Thyroid gland (tissue), 4 donors: ENCODE measurements at regions of chr3 and their contacts with region 1.

Region 1: DNA sequence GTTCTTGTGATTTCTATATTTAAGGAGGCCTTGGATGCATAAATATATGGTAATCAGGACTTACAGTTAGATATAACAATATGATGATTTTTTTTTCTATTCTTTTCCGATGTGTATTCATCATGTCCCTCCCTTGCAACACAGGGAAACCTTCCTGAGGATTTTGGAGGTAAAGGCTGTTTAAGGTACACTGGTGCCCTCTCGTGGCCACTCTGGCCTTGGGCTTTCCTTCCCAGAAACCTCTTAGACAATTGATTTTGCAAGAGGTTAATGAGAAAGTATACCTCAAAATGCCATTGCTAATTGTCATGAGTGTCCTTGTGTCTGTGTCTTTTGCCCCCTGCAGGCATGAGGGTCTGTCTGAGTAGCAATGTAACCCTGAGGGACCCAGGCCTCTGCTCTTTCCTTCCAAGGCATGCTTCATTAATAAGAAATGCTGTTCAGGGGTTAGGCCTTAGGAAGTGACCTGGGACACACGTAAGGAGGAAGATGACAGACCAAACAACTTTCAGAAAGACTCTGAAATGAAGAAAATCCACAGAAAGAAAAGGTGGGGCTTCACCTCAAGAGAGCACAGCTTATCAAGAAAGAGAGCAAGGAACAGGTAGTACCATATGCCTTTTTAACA is 70.3 kb upstream of the PPP2R3A start:
- DNase-seq: peak; percentile 77 to 82
- H3K4me3 ChIP-seq: no peak overlapping the region
- H3K27ac ChIP-seq: no peak overlapping the region
- H3K4me1 ChIP-seq: no peaks in the 10 kb centered on the region
- H3K27me3 ChIP-seq: no peaks in the 10 kb centered on the region
- CTCF ChIP-seq: peak; percentile 47 to 85 (median 76)
- POLR2A ChIP-seq: no peak

Region 2: GRCh38 chr3:134600685-134601463 is 1294.3 kb before region 1 on chr3:
- intact Hi-C with region 1: loop called (anchors 10 kb)
- DNase-seq: peak; percentile 67 to 72
- H3K4me3 ChIP-seq: no peak overlapping the region
- H3K27ac ChIP-seq: no peak overlapping the region
- H3K4me1 ChIP-seq: peaks cover 4 to 11% of the 10 kb centered on the region in 2 donors
- H3K27me3 ChIP-seq: no peaks in the 10 kb centered on the region
- CTCF ChIP-seq: peak; percentile 75 to 98 (median 90)
- POLR2A ChIP-seq: no peak

Region 3: DNA sequence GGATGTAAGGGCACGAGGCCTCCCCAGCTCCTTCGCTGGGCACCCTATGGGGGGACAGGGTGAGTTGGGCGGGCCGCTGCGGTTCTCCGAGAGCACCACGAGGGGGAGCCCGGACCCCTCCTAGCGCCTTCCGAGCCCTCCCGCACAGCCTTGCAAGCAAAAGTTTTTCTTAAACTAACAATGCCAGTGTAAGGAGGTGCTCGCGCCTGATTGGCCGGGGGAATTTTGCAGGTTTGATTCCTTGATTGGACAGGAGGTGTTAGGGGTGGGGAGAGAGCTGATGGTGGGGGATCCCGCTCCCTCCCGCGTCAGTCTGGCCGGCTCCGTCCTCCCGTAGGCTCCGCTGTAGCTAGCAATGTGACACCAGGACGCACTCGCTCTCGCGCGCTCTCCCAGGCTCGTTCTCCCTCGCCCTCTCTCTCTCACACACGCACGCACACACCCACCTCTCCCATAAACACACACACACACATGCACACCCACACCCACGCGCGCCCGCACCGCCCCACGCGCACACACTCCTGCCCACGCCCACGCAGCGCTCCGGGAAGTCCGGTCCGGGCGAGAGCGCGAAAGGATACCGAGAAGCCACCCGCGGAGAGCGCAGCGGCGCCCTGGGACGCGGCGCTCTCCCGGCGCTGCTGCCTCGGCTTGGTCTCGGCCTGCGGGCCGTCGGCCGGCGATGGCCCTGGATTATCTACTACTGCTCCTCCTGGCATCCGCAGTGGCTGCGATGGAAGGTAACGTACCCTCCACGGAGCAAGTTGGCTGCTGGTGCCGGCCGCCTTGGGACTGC is 1100.1 kb before region 1 on chr3 and contains the start of gene EPHB1:
- intact Hi-C with region 1: loop called (anchors 10 kb)
- DNase-seq: peak; percentile 92 to 94
- H3K4me3 ChIP-seq: peak within 1 kb of the TSS; percentile 37 to 68 (median 38)
- H3K27ac ChIP-seq: no peak within 1 kb of the TSS
- H3K4me1 ChIP-seq: peaks cover 5 to 23% of the 10 kb centered on the region in 2 donors
- H3K27me3 ChIP-seq: no peaks in the 10 kb centered on the region
- CTCF ChIP-seq: peak; percentile 68 to 97 (median 94)
- POLR2A ChIP-seq: peak in 1 of 2 donors; percentile 91
- total RNA-seq, gene EPHB1: 2.3 to 5.6 (median 4.6) TPM